GM12878 (cell line): ENCODE measurements at regions of chr10 and their contacts with region 1.

Region 1: GRCh38 chr10:75726522-75727477 is 295.4 kb downstream of the LRMDA start:
- DNase-seq: no peak
- ATAC-seq: no peak
- H3K4me3 ChIP-seq: no peak overlapping the region
- H3K27ac ChIP-seq: no peak overlapping the region
- H3K4me1 ChIP-seq: no peaks in the 10 kb centered on the region
- H3K27me3 ChIP-seq: no peaks in the 10 kb centered on the region
- CTCF ChIP-seq: no peak
- EP300 ChIP-seq: no peak
- POLR2A ChIP-seq: no peak
- RAD21 ChIP-seq: no peak

Region 2: DNA sequence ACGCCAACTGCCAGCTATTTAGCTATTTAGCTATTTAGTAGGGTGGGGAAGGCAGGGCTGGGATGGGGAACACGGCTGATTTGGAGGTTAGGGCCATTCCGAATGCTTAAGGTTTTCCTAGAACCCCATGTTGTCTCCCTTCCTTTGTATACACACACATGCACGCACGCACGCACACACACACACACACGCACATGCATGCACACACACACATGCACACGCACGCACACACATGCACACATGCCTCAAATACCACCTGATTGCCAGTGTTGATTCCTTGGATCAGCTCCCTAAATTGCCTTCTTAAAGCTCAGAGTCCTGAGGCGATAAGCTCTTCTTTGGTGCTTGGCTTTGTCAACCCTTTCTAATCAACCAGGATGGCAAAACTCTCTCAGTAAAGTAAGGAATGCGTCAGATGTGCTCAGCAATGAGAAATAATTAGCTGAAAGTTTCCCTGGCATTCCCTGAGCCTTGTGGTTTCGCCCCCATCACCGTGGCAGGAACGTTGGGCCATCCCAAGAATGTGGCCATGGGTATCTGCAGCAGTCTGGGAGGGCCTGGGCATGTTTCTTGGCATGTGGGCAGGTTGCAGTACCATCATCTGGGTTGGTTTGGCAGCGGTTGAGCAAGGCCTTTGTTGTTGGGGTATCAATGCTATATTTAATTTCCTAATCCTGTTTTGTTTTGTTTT is 10.2 kb after region 1 on chr10:
- CTCF ChIA-PET with region 1: no interaction called
- POLR2A ChIA-PET with region 1: no interaction called
- RAD21 ChIA-PET with region 1: no interaction called
- SMC1A ChIA-PET with region 1: interaction called, 11 read pairs
- in situ Hi-C with region 1: no loop called
- intact Hi-C with region 1: no loop called
- DNase-seq: no peak
- ATAC-seq: no peak
- H3K4me3 ChIP-seq: no peak overlapping the region
- H3K27ac ChIP-seq: no peak overlapping the region
- H3K4me1 ChIP-seq: no peaks in the 10 kb centered on the region
- H3K27me3 ChIP-seq: no peaks in the 10 kb centered on the region
- CTCF ChIP-seq: no peak
- EP300 ChIP-seq: no peak
- POLR2A ChIP-seq: no peak
- RAD21 ChIP-seq: no peak

Region 3: DNA sequence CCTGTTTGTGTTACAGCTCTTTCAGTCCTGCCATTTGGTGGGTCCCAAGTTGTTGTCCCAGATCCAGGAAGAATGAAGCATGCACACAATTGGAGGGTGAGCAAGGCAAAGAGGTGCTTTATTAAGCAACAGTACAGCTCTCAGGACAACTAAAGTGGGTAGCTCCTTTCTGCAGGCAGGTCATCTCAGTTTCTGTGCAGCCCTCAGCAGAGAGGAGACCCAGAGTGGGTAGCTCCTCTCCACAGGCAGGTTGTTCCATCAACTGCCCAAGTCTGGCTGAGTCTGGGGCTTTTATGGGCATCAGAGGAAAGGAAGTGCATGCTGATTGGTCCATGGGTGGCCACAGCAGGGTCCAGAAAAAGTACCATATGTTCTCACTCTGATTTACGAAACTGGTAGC is 329.2 kb after region 1 on chr10:
- CTCF ChIA-PET with region 1: no interaction called
- POLR2A ChIA-PET with region 1: no interaction called
- RAD21 ChIA-PET with region 1: no interaction called
- SMC1A ChIA-PET with region 1: no interaction called
- in situ Hi-C with region 1: no loop called
- intact Hi-C with region 1: no loop called
- DNase-seq: no peak
- ATAC-seq: no peak
- H3K4me3 ChIP-seq: no peak overlapping the region
- H3K27ac ChIP-seq: no peak overlapping the region
- H3K4me1 ChIP-seq: no peaks in the 10 kb centered on the region
- H3K27me3 ChIP-seq: no peaks in the 10 kb centered on the region
- CTCF ChIP-seq: no peak
- EP300 ChIP-seq: no peak
- POLR2A ChIP-seq: no peak
- RAD21 ChIP-seq: no peak